ENCODE measurements at regions of chr12 and their contacts with region 1.

Region 1: GRCh38 chr12:7060353-7060954 is at the start of gene C1S:
- DNase-seq: peak; percentile 52 to 61
- H3K4me3 ChIP-seq: peak within 1 kb of the TSS in 1 of 3 donors; percentile 12
- H3K27ac ChIP-seq: peak within 1 kb of the TSS; percentile 63 to 72 (median 67)
- H3K4me1 ChIP-seq: peaks cover 0 to 15% of the 10 kb centered on the region in 2 donors
- H3K27me3 ChIP-seq: no peaks in the 10 kb centered on the region
- CTCF ChIP-seq: peak in 5 of 6 experiments; percentile 46 to 92 (median 81)
- POLR2A ChIP-seq: peak in 1 of 2 donors; percentile 35
- total RNA-seq, gene C1S: 137 to 470 (median 255) TPM

Region 2: GRCh38 chr12:7092229-7092985 is 32.0 kb after region 1 on chr12 and contains the start of gene C1R:
- intact Hi-C with region 1: loop called (anchors 5 kb)
- DNase-seq: peak; percentile 67 to 79
- H3K4me3 ChIP-seq: peak within 1 kb of the TSS in 1 of 3 donors; percentile 29
- H3K27ac ChIP-seq: peak within 1 kb of the TSS; percentile 14 to 65 (median 63)
- H3K4me1 ChIP-seq: peaks cover 0 to 21% of the 10 kb centered on the region in 2 donors
- H3K27me3 ChIP-seq: no peaks in the 10 kb centered on the region
- CTCF ChIP-seq: peak; percentile 76 to 90 (median 82)
- POLR2A ChIP-seq: peak in 1 of 2 donors; percentile 16
- total RNA-seq, gene C1R: 132 to 545 (median 312) TPM

Region 3: DNA sequence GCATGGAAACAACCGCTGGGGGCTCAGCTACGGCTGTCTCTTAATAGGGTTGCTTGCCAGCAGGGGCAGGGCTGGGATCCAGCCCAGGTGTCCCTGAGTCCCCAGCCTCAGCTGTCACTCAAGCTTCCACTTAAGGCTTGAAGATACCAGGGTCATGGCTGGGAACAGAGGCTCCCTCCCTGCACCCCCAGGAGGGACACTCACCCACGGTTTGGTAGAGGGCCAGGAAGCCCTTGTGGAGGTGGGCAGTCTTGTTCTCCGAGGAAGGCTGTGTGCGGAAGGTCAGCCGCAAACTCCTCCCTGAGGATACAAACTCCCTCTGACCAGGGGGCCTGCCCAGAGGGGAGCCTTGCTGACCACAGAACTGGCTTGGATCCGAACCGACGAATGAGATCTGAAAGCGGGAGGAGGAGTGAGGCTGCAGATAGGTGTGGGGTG is 41.3 kb after region 1 on chr12:
- intact Hi-C with region 1: loop called (anchors 5 kb)
- DNase-seq: no peak
- H3K4me3 ChIP-seq: no peak overlapping the region
- H3K27ac ChIP-seq: peak overlapping the region in 1 of 3 donors; percentile 57
- H3K4me1 ChIP-seq: no peaks in the 10 kb centered on the region
- H3K27me3 ChIP-seq: no peaks in the 10 kb centered on the region
- CTCF ChIP-seq: no peak
- POLR2A ChIP-seq: no peak

Region 4: DNA sequence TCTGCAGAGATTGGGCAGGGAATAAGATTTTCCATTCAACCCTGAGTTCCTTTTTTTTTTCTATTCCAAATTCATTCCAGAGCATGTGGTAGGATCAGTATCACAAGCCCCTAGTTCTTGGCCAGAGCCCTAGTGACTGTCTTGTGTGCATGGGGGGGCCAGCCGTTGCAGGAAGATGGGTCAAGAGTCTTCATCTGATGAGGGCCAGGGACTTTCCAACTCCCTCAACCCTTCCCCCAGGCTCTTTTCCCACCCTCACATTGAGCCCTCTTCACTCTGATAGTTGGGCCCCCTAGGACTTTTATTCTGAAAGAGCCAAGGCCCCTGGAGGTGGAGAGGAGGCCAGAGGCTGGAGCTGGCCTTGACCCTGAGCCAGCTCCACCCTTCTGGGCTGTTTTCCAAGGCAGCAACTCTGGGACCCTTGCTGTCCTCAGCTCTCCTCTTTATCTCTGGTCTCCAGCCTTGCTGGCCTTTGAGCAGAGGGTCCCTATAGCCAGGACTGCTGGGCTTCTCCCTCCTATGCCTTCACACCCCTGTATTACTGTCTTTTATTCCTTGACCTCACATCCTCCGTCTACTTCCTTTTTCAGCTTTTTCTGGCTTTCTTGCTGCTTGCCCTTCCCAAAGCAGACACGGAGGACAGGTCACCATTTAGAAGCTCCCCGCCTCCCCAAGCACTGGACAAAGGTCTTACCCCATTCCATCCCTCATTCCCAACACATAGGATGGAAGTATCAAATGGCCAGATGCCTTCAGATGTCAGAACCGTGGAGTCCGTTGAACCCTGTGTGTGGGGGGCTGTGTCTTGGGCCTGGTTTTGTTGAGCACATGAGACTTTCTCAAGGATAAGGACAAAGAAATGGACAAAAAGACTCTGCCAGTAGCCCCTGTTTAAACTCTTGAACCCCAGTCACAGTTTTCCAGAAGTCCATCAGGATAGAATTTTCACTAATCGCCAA is 62.6 kb after region 1 on chr12:
- intact Hi-C with region 1: no loop called
- DNase-seq: no peak
- H3K4me3 ChIP-seq: no peak overlapping the region
- H3K27ac ChIP-seq: no peak overlapping the region
- H3K4me1 ChIP-seq: peaks cover 0 to 7% of the 10 kb centered on the region in 2 donors
- H3K27me3 ChIP-seq: no peaks in the 10 kb centered on the region
- CTCF ChIP-seq: no peak
- POLR2A ChIP-seq: no peak

Region 5: GRCh38 chr12:7229741-7230140 is 169.3 kb after region 1 on chr12:
- intact Hi-C with region 1: no loop called
- DNase-seq: no peak
- H3K4me3 ChIP-seq: no peak overlapping the region
- H3K27ac ChIP-seq: no peak overlapping the region
- H3K4me1 ChIP-seq: no peaks in the 10 kb centered on the region
- H3K27me3 ChIP-seq: no peaks in the 10 kb centered on the region
- CTCF ChIP-seq: no peak
- POLR2A ChIP-seq: no peak

Measured in thyroid gland (tissue), 4 donors.